ENCODE measurements at regions of chr7 and their contacts with region 1.

Region 1: GRCh38 chr7:15376600-15376999 is 185.2 kb downstream of the AGMO start:
- DNase-seq: no peak

Region 2: DNA sequence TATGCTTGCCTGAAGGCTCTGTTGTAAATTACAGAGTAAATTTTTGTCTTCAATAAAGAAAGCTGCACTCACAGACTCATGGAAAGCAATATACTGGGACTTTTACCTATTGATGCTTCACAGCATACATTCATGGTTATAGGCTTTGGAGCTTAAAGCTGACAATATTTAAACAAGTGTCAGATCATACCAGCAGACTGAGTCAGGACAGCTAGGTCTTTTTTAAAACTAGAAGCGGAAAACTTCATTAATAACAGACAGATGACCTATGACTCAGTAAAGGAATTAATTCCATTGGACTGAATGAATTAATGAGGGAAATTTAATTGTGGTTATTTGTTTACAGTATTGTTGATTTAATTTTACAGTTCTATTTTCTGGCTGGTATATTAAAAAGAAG is 308.3 kb before region 1 on chr7:
- CTCF ChIA-PET with region 1: no interaction called
- POLR2A ChIA-PET with region 1: no interaction called
- DNase-seq: no peak

Region 3: GRCh38 chr7:15341817-15342216 is 34.8 kb before region 1 on chr7:
- CTCF ChIA-PET with region 1: no interaction called
- POLR2A ChIA-PET with region 1: no interaction called
- DNase-seq: no peak

Region 4: DNA sequence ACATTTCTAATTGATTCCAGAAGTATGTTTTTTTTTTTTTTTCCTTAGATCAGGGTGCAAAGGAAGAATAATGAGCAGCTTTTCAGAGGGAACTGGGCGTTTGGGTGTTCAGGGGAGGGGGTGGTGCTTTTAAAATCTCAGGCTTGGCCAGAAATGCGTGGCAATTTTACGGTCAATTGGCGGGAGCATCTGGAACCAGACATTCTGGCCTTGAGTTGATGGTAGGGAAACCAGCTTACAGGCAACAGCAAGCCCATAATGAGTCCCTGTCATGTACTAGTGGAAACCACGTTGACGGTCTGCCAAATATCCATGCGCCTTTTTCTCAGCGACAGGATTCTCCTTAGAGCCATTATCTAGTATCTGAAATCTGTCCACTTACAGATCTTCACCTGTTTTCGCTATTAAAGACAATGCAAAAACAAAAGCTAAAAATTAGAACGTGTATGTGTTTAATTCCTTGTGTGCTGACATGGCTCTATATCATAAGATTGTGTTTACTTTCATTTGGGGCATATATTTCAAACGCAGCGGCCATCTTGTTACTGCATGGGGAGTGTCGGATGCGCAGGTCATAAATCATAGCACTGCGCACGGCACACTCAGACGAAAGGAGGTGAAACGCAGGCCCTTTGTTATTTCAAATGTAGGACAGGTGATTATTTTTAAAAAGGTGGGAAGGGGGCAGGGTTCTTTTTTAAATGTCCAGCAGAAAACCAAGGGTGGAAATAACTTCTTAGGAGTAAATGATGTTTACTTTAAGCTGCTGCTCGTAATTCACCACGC is 24.0 kb before region 1 on chr7:
- CTCF ChIA-PET with region 1: interaction called, 10 read pairs
- POLR2A ChIA-PET with region 1: no interaction called
- DNase-seq: no peak

Measured in HEK293T (cell line).